Activated CD4-positive, alpha-beta T cell treated with anti-CD3 and anti-CD28 coated beads, Interleukin-2, amount 10 ng/mL, durations not matched to agents 24 days and 14 days (primary cell): ENCODE measurements at regions of chr6 and their contacts with region 1.

Region 1: GRCh38 chr6:119463081-119463626 is 113.6 kb upstream of the MAN1A1 start:
- DNase-seq: peak; percentile 77
- H3K4me3 Mint-ChIP-seq: peak overlapping the region; percentile 9
- H3K27ac Mint-ChIP-seq: peak overlapping the region; percentile 89
- H3K4me1 Mint-ChIP-seq: peaks cover 48% of the 10 kb centered on the region
- H3K27me3 Mint-ChIP-seq: no peaks in the 10 kb centered on the region

Region 2: DNA sequence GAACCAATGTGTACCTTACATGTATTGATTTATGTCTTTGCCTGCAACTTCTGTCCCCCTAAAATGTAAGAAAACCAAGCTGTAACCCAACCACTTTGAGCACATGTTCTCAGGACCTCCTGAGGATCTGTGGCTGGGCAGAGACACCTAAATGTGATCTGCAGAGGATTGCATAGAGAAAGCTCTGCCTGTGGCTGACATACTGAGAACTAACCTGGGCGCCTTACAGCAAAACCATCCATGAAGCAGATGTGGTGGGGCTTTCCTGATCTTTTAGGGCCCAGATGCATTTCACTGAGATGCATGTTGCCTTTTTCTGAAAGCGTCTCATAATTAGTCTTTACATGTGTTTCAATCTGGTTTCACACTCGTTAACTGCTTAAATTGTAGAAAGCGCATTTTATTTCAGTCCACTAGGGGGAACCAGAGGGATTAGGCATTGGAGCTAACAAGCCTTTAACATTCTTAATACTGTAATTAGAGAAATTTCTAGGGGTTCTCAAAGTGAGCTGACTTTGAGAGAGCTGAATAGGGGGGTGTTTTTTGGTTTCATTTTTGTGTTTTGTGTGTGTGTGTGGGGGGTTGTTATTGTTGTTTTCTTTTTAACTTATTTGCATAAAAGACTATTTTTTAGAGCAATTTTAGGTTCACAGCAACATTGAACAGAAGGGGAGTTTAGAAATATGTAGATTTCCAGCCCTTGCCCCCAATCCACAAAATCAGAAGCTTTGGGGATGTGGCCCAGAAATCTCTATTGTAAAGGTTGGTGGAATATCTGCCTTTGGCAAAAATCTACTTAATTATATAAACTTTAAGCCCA is 333.8 kb before region 1 on chr6:
- intact Hi-C with region 1: no loop called
- DNase-seq: peak; percentile 83
- H3K4me3 Mint-ChIP-seq: no peak overlapping the region
- H3K27ac Mint-ChIP-seq: peak overlapping the region; percentile 38
- H3K4me1 Mint-ChIP-seq: peaks cover 12% of the 10 kb centered on the region
- H3K27me3 Mint-ChIP-seq: peaks cover 5% of the 10 kb centered on the region

Region 3: GRCh38 chr6:119446115-119446554 is 17.0 kb before region 1 on chr6:
- intact Hi-C with region 1: loop called (anchors 1 kb)
- DNase-seq: no peak
- H3K4me3 Mint-ChIP-seq: no peak overlapping the region
- H3K27ac Mint-ChIP-seq: peak overlapping the region; percentile 45
- H3K4me1 Mint-ChIP-seq: peaks cover 41% of the 10 kb centered on the region
- H3K27me3 Mint-ChIP-seq: no peaks in the 10 kb centered on the region

Region 4: GRCh38 chr6:119499797-119500196 is 36.6 kb after region 1 on chr6:
- intact Hi-C with region 1: loop called (anchors 1 kb)
- DNase-seq: no peak
- H3K4me3 Mint-ChIP-seq: no peak overlapping the region
- H3K27ac Mint-ChIP-seq: no peak overlapping the region
- H3K4me1 Mint-ChIP-seq: peaks cover 4% of the 10 kb centered on the region
- H3K27me3 Mint-ChIP-seq: peaks cover 10% of the 10 kb centered on the region

Region 5: GRCh38 chr6:119533603-119534279 is 70.6 kb after region 1 on chr6:
- intact Hi-C with region 1: loop called (anchors 10 kb)
- DNase-seq: no peak
- H3K4me3 Mint-ChIP-seq: no peak overlapping the region
- H3K27ac Mint-ChIP-seq: no peak overlapping the region
- H3K4me1 Mint-ChIP-seq: peaks cover 8% of the 10 kb centered on the region
- H3K27me3 Mint-ChIP-seq: peaks cover 22% of the 10 kb centered on the region